Ascending aorta (tissue), 2 donors: ENCODE measurements at regions of chr13 and their contacts with region 1.

Region 1: DNA sequence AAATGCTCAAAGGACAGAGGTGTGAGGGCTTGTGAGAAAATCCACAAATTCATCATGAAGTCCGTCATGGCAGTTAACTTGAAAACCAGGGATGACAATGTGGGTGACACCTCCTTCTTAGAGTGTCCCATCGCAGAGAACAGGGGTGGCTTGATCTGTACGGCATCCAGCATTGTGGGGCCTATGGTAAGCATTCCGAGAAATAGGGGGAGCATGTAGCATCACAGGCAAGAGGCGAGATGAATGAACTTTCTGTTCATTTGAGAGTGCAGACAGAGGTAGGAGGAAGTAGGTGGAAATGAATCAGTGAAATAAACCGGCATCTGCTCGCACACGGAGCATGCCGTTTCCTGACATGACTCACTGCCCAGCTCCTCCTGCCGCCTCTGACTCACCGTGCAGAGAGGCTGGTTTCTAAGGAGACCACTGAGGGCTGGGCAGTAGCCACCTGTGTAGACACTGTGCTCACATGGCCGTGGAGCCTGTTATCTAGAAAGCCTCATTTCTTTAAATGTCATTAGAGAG is 339.0 kb downstream of the RFC3 start:
- DNase-seq: peak; percentile 69 to 92
- H3K4me3 ChIP-seq: no peak overlapping the region
- H3K27ac ChIP-seq: peak overlapping the region; percentile 88
- H3K4me1 ChIP-seq: peaks cover 11 to 32% of the 10 kb centered on the region in 2 donors
- H3K27me3 ChIP-seq: no peaks in the 10 kb centered on the region
- CTCF ChIP-seq: no peak

Region 2: DNA sequence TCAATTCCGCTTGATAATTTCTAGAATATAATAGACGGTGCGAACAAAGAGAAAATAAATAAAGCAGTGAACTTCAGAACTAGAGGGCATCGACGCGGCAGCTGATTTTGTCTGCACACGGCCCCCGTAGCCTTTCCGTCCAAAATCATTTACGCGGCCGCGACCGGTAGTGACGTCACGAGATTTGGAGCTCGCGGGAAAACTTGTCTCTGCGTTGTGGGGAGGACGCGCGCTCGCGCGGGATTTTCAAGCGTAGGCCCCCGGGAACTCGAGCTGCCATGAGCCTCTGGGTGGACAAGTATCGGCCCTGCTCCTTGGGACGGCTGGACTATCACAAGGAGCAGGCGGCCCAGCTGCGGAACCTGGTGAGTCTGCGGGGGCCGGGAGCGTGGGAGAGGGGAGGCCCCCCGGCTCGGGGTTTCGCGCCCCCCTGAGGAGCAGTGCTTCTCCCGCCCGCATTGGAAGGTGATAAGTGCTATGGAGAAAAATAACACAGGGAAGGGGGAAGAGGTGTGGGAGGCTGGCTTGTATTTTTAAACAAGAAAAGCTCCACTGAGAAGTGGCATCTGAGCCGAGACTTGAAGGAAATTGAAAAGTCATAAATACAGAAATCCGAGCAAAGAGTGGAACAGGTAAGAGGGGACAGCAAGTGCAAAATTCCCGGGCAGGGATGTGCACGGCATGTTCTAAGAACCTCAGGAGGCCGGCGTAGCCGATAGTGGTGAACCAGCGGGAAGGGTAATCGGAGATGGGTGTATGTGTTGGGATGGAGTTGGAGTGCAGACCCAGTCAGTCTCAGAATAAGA is 338.8 kb before region 1 on chr13 and contains the start of gene RFC3:
- intact Hi-C with region 1: loop called (anchors 10 kb)
- DNase-seq: peak; percentile 72 to 95
- H3K4me3 ChIP-seq: peak within 1 kb of the TSS; percentile 71 to 76
- H3K27ac ChIP-seq: peak within 1 kb of the TSS; percentile 35 to 54
- H3K4me1 ChIP-seq: no peaks in the 10 kb centered on the region
- H3K27me3 ChIP-seq: no peaks in the 10 kb centered on the region
- CTCF ChIP-seq: no peak
- total RNA-seq, gene RFC3: 6.2 TPM

Region 3: GRCh38 chr13:33859691-33860303 is 297.1 kb before region 1 on chr13:
- intact Hi-C with region 1: no loop called
- DNase-seq: no peak
- H3K4me3 ChIP-seq: no peak overlapping the region
- H3K27ac ChIP-seq: no peak overlapping the region
- H3K4me1 ChIP-seq: no peaks in the 10 kb centered on the region
- H3K27me3 ChIP-seq: no peaks in the 10 kb centered on the region
- CTCF ChIP-seq: no peak

Region 4: DNA sequence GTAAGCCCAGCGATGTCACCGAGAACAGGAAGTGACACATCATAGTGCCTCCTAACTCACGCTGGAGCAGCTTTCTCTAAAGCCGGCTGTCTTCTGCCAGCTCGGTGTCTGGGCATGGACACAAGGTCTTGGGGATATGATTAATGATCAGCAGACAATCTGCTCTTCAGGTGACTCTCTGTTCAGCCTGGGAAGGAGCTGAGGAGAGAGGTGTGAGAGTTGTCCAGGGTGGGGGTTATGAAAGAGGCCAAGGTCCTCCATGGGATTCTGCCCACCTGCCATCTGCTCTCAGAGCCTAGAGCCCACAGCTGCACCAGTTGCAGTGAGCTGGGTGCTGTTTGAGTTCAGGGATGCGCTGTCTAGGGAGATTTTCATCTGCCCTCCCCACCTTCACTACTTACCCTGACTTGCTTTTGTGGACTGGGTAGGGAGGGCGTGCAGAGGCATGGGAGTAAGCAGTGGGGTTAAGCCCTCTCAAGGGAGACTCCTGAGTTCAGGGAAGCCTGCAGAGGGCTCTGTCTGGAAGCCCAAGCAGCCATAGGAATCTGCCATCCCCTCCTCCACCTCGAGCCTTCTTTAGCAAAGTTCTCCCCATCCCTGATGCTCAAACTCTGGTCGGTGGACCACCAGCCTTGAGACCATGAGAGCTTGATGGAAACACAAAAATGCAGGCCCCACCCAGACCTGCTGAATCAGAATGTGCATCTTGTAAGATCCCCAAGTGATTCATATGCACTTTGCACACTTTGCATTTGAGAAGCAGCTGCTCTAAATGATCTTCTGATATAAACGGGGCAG is 200.7 kb after region 1 on chr13:
- intact Hi-C with region 1: loop called (anchors 5 kb)
- DNase-seq: no peak
- H3K4me3 ChIP-seq: no peak overlapping the region
- H3K27ac ChIP-seq: peak overlapping the region in 1 of 2 donors; percentile 37
- H3K4me1 ChIP-seq: peaks cover 0 to 6% of the 10 kb centered on the region in 2 donors
- H3K27me3 ChIP-seq: no peaks in the 10 kb centered on the region
- CTCF ChIP-seq: no peak

Region 5: DNA sequence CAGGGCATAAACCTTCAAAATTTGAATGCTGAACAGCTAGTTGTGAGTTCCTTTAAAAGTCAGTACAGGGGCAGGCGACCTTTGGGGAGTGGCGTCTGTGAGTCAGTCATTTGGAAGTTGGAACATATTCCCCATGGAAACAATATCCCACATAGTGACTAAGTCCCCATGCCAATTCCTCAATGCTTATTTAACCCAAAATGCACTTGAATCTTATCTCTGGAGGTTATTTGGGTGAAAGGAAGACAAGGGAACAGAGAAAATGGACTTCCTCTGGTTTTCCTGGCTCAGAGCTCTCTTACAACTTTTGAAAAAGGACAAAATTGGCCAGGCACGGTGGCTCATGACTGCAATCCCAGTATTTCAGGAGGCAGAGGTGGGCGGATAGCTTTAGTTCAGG is 305.9 kb after region 1 on chr13:
- intact Hi-C with region 1: loop called (anchors 10 kb)
- DNase-seq: peak in 1 of 2 donors; percentile 64
- H3K4me3 ChIP-seq: no peak overlapping the region
- H3K27ac ChIP-seq: peak overlapping the region in 1 of 2 donors; percentile 8
- H3K4me1 ChIP-seq: peaks cover 0 to 9% of the 10 kb centered on the region in 2 donors
- H3K27me3 ChIP-seq: no peaks in the 10 kb centered on the region
- CTCF ChIP-seq: no peak